Activated CD4-positive, alpha-beta T cell treated with anti-CD3 and anti-CD28 coated beads for 36 hours (primary cell): ENCODE measurements at regions of chr15 and their contacts with region 1.

Region 1: DNA sequence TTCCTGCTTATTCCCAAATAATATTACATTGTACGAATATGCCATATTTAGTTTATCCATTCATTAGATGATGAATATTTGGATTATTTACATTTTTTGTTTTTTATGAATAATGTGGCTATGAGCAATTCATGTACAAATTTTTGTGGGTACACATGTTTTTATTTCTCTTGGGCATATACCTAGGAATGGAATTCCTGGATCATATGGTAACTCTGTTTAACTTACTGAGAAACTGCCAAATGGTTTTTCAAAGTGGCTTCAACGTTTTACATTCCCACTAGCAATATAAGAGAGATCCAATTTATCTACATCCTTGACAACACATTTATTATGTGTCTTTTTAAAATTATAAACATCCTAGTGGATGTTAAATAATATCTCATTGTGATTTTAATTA is 362.0 kb upstream of the TMCO5A start:
- DNase-seq: no peak
- ATAC-seq: no peak
- H3K4me3 Mint-ChIP-seq: no peak overlapping the region
- H3K27ac Mint-ChIP-seq: no peak overlapping the region
- H3K4me1 Mint-ChIP-seq: no peaks in the 10 kb centered on the region
- H3K27me3 Mint-ChIP-seq: no peaks in the 10 kb centered on the region

Region 2: GRCh38 chr15:37625576-37625975 is 53.2 kb after region 1 on chr15:
- CTCF ChIA-PET with region 1: no interaction called
- POLR2A ChIA-PET with region 1: no interaction called
- intact Hi-C with region 1: loop called in 1 of 2 experiments (anchors 10 kb)
- DNase-seq: no peak
- ATAC-seq: no peak
- H3K4me3 Mint-ChIP-seq: no peak overlapping the region
- H3K27ac Mint-ChIP-seq: no peak overlapping the region
- H3K4me1 Mint-ChIP-seq: no peaks in the 10 kb centered on the region
- H3K27me3 Mint-ChIP-seq: no peaks in the 10 kb centered on the region